CD4-positive, alpha-beta T cell (primary cell): ENCODE measurements at regions of chr15 and their contacts with region 1.

Region 1: DNA sequence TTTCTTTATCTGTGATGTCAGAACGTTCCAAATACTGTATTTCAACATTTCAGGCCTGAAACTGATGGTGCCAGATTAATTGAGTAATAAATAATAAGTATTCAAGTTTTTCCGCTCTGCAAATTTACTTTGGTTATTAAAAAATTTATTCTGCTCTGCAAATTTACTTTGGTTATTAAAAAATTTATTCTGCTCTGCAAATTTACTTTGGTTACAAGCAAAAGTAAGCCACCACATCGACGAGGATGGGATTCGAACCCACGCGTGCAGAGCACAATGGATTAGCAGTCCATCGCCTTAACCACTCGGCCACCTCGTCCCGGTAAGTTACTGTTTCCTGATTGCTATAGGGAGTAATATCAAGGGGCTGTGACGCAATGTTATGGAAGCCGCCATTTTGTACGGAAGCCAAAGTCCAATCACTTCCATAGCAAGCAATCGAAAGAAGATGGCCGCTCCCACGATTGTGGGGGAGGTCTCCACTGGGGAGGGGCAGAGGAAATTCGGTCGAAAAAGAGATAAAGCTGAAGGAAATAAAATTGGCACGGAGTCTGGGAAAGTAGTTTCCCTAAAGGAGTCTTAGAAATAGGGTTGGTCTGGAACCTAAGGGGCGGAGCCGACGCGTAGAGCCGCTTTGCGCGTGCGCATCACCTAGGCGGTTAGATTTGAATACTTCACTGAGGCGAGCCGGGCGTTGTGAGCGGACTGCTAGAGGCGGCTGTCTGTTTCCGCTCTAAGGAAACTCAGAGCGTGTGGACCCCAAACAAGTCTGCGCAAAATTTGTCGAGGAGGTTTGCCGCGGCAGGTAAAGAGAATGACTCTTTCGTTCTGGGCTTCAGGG is at the start of gene KNL1:
- DNase-seq: peak; percentile 74 to 95 (median 83)
- ATAC-seq: peak; percentile 80
- H3K4me3 ChIP-seq: peak within 1 kb of the TSS; percentile 78
- H3K4me3 Mint-ChIP-seq: peak within 1 kb of the TSS; percentile 99
- H3K27ac ChIP-seq: peak within 1 kb of the TSS; percentile 89 to 91
- H3K27ac Mint-ChIP-seq: peak within 1 kb of the TSS; percentile 91
- H3K4me1 ChIP-seq: peaks cover 20% of the 10 kb centered on the region
- H3K4me1 Mint-ChIP-seq: peaks cover 33% of the 10 kb centered on the region
- H3K27me3 ChIP-seq: peaks cover 0 to 5% of the 10 kb centered on the region in 2 experiments
- H3K27me3 Mint-ChIP-seq: peaks cover 18% of the 10 kb centered on the region
- CTCF ChIP-seq: no peak
- total RNA-seq, gene KNL1: 0.59 to 0.69 TPM

Region 2: DNA sequence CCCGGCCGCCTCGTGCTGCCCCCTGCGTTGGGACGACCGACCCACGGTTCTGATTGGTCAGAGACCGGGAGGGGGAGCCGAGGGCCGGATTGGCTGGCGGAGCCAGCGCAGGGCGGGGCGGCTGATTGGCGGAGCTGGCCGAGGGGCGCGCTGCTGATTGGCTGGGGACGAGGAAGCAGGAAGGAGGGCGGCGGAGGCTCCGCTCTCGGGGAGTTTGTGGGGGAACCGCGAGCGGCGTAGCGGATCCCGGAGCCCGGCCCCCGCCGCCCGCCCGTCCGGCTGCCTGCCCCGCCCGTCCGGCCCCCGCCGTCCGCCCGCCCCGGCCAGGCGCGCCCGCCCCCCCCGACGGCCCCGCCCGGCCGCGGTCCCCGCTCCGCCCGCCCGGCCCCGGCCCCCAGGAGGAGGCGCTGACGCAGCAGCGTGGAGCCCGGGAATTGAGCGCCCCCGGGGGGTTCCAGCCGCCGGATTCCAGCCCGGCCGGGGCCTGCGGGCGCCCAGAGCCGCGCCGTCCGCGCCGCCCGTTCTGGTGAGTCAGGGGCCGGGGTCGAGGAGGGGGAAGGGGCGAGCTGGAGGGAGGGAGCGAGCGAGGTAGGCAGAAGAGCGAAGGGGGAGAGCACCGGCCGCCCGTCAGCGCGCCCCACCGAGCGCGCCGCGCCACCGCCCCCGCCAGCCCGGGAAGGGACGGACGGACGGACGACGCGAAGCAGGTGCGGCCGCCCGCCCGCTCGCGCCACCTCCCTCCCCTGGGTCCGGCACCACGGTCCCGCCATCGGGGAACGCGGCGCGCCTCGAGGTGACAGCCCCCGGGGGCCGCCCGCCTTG is 152.9 kb before region 1 on chr15 and contains the start of gene BAHD1:
- CTCF ChIA-PET with region 1: no interaction called
- POLR2A ChIA-PET with region 1: interaction called, 3 read pairs
- intact Hi-C with region 1: loop called in 1 of 2 experiments (anchors 10 kb)
- DNase-seq: peak; percentile 84 to 96 (median 93)
- ATAC-seq: peak; percentile 84
- H3K4me3 ChIP-seq: peak within 1 kb of the TSS; percentile 71
- H3K4me3 Mint-ChIP-seq: peak within 1 kb of the TSS; percentile 95
- H3K27ac ChIP-seq: no peak within 1 kb of the TSS
- H3K27ac Mint-ChIP-seq: peak within 1 kb of the TSS; percentile 82
- H3K4me1 ChIP-seq: peaks cover 73% of the 10 kb centered on the region
- H3K4me1 Mint-ChIP-seq: peaks cover 76% of the 10 kb centered on the region
- H3K27me3 ChIP-seq: peaks cover 20 to 24% of the 10 kb centered on the region in 2 experiments
- H3K27me3 Mint-ChIP-seq: peaks cover 37% of the 10 kb centered on the region
- CTCF ChIP-seq: no peak
- total RNA-seq, gene BAHD1: 20.3 to 21.5 TPM

Region 3: DNA sequence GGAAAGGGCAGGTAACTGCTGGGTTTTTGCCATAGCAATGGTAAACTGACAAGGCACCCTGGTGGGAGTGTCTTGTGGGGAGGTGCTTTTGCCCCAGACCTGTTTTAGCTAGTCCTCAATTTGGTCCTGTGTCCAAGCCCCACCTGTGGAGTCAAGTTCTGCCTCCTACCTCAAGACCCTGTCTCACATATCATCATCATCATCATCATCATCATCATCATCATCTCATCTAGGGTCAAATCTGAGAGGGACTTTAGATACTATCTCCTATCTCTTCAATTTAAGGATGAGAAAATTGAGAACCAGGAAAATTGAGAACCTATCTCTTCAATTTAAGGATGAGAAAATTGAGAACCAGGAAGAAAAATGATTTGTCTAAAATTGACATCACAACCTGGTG is 10.1 kb after region 1 on chr15:
- CTCF ChIA-PET with region 1: interaction called, 13 read pairs
- POLR2A ChIA-PET with region 1: no interaction called
- intact Hi-C with region 1: no loop called
- DNase-seq: no peak
- ATAC-seq: no peak
- H3K4me3 ChIP-seq: no peak overlapping the region
- H3K4me3 Mint-ChIP-seq: no peak overlapping the region
- H3K27ac ChIP-seq: no peak overlapping the region
- H3K27ac Mint-ChIP-seq: no peak overlapping the region
- H3K4me1 ChIP-seq: no peaks in the 10 kb centered on the region
- H3K4me1 Mint-ChIP-seq: no peaks in the 10 kb centered on the region
- H3K27me3 ChIP-seq: no peaks in the 10 kb centered on the region
- H3K27me3 Mint-ChIP-seq: no peaks in the 10 kb centered on the region
- CTCF ChIP-seq: no peak

Region 4: DNA sequence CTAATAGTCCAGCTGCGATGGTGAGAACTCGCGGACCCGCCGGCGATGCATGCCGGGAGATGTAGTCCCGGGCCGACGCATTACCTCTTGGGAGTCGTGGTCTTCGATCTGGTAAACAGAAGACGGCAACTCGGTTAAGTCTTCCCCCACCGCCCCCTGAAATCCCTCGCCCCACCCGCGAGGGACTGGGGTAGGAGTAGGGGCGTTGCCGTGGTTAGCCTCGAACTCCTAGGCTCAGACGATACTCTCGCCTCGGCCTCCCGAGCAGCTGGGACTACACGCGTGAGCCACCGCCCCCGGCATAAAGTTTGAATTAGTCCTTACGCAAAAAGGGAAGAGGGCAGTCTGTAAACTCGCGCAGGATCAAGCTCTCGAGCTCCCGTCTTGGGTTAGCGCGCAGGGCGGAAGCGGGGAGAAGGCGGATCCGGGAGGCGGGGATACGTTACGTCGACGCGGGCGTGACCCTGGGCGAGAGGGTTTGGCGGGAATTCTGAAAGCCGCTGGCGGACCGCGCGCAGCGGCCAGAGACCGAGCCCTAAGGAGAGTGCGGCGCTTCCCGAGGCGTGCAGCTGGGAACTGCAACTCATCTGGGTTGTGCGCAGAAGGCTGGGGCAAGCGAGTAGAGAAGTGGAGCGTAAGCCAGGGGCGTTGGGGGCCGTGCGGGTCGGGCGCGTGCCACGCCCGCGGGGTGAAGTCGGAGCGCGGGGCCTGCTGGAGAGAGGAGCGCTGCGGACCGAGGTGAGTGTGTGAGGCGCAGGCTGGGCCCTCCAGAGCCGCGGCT is 101.1 kb after region 1 on chr15 and contains the start of gene RAD51:
- CTCF ChIA-PET with region 1: interaction called, 6 read pairs
- POLR2A ChIA-PET with region 1: interaction called, 8 read pairs
- intact Hi-C with region 1: loop called in 1 of 2 experiments (anchors 2 kb)
- DNase-seq: peak; percentile 87 to 96 (median 93)
- ATAC-seq: peak; percentile 91
- H3K4me3 ChIP-seq: peak within 1 kb of the TSS; percentile 82
- H3K4me3 Mint-ChIP-seq: peak within 1 kb of the TSS; percentile 97
- H3K27ac ChIP-seq: peak within 1 kb of the TSS; percentile 94 to 99
- H3K27ac Mint-ChIP-seq: peak within 1 kb of the TSS; percentile 98
- H3K4me1 ChIP-seq: peaks cover 23% of the 10 kb centered on the region
- H3K4me1 Mint-ChIP-seq: peaks cover 21% of the 10 kb centered on the region
- H3K27me3 ChIP-seq: no peaks in the 10 kb centered on the region
- H3K27me3 Mint-ChIP-seq: no peaks in the 10 kb centered on the region
- CTCF ChIP-seq: no peak
- total RNA-seq, gene RAD51: 0.64 to 1.5 TPM

Region 5: DNA sequence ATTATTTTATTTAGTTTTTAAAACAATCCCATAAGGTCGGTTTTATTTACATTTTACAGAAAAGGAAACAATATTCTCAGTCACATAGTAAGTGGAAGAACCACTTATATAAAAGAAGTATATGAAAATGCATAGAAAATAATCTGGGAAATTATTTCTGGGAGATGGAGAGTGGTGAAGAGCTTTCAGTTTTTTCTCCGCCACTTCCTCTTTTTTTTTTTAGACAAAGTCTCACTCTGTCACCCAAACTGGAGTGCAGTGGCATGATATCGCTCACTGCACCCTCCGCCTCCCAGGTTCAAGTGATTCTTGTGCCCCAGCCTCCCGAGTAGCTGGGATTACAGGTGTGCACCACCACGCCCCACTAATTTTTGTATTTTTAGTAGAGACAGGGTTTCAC is 122.4 kb after region 1 on chr15:
- CTCF ChIA-PET with region 1: no interaction called
- POLR2A ChIA-PET with region 1: no interaction called
- intact Hi-C with region 1: no loop called
- DNase-seq: no peak
- ATAC-seq: no peak
- H3K4me3 ChIP-seq: no peak overlapping the region
- H3K4me3 Mint-ChIP-seq: no peak overlapping the region
- H3K27ac ChIP-seq: no peak overlapping the region
- H3K27ac Mint-ChIP-seq: no peak overlapping the region
- H3K4me1 ChIP-seq: no peaks in the 10 kb centered on the region
- H3K4me1 Mint-ChIP-seq: no peaks in the 10 kb centered on the region
- H3K27me3 ChIP-seq: no peaks in the 10 kb centered on the region
- H3K27me3 Mint-ChIP-seq: no peaks in the 10 kb centered on the region
- CTCF ChIP-seq: no peak

Region 6: DNA sequence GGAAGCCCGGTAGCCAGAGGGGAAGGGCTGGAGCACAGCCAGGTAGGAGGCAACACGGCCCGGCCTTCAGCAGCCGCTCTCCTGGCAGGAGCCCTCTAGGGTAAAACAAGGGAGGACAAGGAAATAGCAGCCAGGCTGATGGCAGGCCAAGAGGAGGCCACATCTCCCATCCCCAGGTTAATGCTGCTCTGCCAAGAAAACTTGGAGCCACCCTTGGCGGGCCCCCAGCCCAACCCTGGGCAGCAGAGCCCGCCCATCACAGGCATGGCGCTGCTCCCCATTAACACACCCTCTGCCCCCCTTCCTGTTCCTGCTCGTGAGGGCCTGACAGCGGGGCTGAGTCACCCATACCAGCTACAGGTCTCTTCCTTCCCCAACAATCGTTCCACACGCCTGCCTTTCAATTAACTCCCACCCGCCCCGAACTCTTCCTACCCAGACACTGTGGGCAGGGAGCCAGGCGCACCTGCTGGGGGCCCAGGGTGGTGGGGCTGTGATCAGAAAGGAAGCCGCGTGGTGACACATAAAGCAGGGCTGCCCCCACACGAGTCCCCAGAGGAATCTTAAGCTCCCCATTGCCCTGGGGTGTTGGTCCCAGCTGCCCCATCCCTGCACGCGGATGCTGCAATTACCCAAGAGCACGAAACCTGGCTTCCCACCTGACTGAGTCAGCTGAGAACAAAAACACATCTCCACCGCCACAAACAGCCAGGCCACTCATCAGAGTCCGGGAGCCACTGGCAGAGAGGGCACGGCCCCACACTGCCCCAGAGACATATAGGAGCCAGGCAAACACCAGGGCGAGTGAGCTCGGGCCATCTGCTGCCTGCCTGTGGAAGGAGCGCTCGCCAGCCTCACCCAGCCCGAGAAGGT is 175.7 kb after region 1 on chr15 and contains the start of gene C15orf62:
- CTCF ChIA-PET with region 1: no interaction called
- POLR2A ChIA-PET with region 1: no interaction called
- intact Hi-C with region 1: loop called (anchors 5 kb)
- DNase-seq: peak in 12 of 14 experiments; percentile 30 to 84 (median 51)
- ATAC-seq: peak; percentile 54
- H3K4me3 ChIP-seq: no peak within 1 kb of the TSS
- H3K4me3 Mint-ChIP-seq: peak within 1 kb of the TSS; percentile 50
- H3K27ac ChIP-seq: peak within 1 kb of the TSS in 1 of 2 donors; percentile 25
- H3K27ac Mint-ChIP-seq: peak within 1 kb of the TSS; percentile 89
- H3K4me1 ChIP-seq: peaks cover 39% of the 10 kb centered on the region
- H3K4me1 Mint-ChIP-seq: peaks cover 33% of the 10 kb centered on the region
- H3K27me3 ChIP-seq: no peaks in the 10 kb centered on the region
- H3K27me3 Mint-ChIP-seq: no peaks in the 10 kb centered on the region
- CTCF ChIP-seq: no peak
- total RNA-seq, gene C15orf62: 0.77 to 0.98 TPM

Region 7: DNA sequence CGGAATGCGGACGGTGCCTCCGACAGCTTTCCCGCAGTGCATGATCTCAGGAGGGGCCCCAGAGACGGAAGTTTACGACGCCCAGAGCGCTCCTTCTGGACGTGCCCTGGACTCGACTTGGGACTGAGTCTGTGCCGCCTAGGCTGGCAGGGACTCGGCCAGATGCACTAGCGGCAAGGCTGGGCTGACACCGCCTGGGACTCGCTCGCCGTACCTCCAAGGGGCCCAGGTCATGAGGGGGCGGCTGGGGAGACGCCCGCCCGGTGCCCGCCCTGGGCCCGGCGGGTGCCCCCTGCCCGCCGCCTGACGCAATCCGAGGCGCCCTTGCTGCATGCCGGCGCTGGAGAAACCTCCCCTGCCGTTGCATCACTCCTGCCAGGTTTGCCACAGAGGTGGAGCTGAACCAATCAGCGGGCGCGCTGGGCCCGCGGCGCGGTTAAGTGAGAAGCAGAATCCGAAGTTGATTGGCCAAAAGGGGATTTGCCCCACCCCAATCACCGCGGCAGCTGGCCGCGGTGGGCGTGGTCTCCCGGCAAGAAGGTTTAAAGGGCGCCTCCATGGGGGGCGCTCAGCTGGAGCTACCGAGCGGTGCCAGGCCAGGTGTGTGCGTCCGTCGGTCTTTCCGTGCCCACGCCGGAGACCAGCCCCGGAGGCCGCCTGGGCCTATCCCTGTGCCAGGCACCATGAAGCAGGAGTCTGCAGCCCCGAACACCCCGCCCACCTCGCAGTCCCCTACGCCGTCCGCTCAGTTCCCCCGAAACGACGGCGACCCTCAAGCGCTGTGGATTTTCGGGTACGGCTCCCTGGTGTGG is 359.3 kb after region 1 on chr15 and contains the start of gene CHAC1:
- CTCF ChIA-PET with region 1: no interaction called
- POLR2A ChIA-PET with region 1: no interaction called
- intact Hi-C with region 1: loop called in 1 of 2 experiments (anchors 10 kb)
- DNase-seq: peak; percentile 87 to 98 (median 93)
- ATAC-seq: peak; percentile 96
- H3K4me3 ChIP-seq: peak within 1 kb of the TSS; percentile 81
- H3K4me3 Mint-ChIP-seq: peak within 1 kb of the TSS; percentile 96
- H3K27ac ChIP-seq: no peak within 1 kb of the TSS
- H3K27ac Mint-ChIP-seq: peak within 1 kb of the TSS; percentile 82
- H3K4me1 ChIP-seq: peaks cover 18% of the 10 kb centered on the region
- H3K4me1 Mint-ChIP-seq: peaks cover 10% of the 10 kb centered on the region
- H3K27me3 ChIP-seq: peaks cover 0 to 4% of the 10 kb centered on the region in 2 experiments
- H3K27me3 Mint-ChIP-seq: no peaks in the 10 kb centered on the region
- CTCF ChIP-seq: peak; percentile 20
- total RNA-seq, gene CHAC1: 0.42 to 0.47 TPM

Region 8: GRCh38 chr15:41180206-41180789 is 586.5 kb after region 1 on chr15:
- CTCF ChIA-PET with region 1: no interaction called
- POLR2A ChIA-PET with region 1: no interaction called
- intact Hi-C with region 1: no loop called
- DNase-seq: no peak
- ATAC-seq: no peak
- H3K4me3 ChIP-seq: no peak overlapping the region
- H3K4me3 Mint-ChIP-seq: no peak overlapping the region
- H3K27ac ChIP-seq: no peak overlapping the region
- H3K27ac Mint-ChIP-seq: no peak overlapping the region
- H3K4me1 ChIP-seq: no peaks in the 10 kb centered on the region
- H3K4me1 Mint-ChIP-seq: no peaks in the 10 kb centered on the region
- H3K27me3 ChIP-seq: peaks cover 0 to 3% of the 10 kb centered on the region in 2 experiments
- H3K27me3 Mint-ChIP-seq: peaks cover 5% of the 10 kb centered on the region
- CTCF ChIP-seq: no peak

Region 9: DNA sequence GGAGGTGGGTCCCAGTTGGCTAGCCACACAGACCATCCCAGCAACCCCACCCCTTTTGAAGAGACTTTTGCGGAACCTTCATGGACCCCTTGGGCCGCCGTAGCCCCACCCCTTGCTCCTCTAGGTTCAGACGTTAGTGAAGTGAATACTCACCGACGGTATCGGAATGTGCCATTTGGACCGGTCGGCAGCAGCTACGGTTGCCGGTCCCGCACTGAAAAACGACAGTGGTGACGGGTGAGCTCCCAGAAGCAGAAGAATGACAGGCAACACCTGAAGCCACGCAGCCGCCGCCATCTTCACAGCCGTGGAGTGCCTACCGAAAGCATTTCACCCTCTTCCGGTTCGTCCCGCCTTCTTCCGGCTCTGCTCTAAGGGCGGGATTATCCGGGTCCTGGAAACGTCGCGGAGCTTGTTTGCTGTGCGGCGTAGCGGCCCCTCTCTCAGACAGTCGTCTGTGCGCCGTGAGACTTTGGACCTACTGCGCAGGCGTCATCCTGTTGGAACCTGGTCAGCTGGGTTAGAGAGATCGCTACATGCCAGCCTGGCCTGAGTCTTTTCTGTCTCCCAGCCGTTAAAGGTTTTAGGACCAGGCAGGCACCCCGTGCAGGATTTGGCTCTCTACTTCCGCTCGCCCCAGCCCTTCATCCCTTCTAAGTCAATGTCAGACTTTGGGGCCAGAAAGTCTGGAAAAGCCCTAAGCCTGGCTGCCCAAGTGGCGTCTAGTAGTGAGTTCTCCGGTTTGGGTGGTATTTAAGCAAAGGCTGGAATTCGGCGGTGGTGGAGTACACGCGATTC is 1679.5 kb after region 1 on chr15 and contains the starts of genes GANC and TMEM87A:
- CTCF ChIA-PET with region 1: no interaction called
- POLR2A ChIA-PET with region 1: no interaction called
- intact Hi-C with region 1: loop called in 1 of 2 experiments (anchors 10 kb)
- DNase-seq: peak; percentile 90 to 99 (median 94)
- ATAC-seq: peak; percentile 89
- H3K4me3 ChIP-seq: peak within 1 kb of the TSS; percentile 70
- H3K4me3 Mint-ChIP-seq: peak within 1 kb of the TSS; percentile 90
- H3K27ac ChIP-seq: peak within 1 kb of the TSS; percentile 92 to 95
- H3K27ac Mint-ChIP-seq: peak within 1 kb of the TSS; percentile 98
- H3K4me1 ChIP-seq: peaks cover 12% of the 10 kb centered on the region
- H3K4me1 Mint-ChIP-seq: peaks cover 76% of the 10 kb centered on the region
- H3K27me3 ChIP-seq: no peaks in the 10 kb centered on the region
- H3K27me3 Mint-ChIP-seq: no peaks in the 10 kb centered on the region
- CTCF ChIP-seq: no peak
- total RNA-seq, gene GANC: 22.3 to 23.9 TPM
- total RNA-seq, gene TMEM87A: 48.7 to 51.4 TPM